Natural killer cell (primary cell): ENCODE measurements at regions of chr7 and their contacts with region 1.

Region 1: GRCh38 chr7:130961128-130961601 is 227.2 kb upstream of the KLF14 start:
- DNase-seq: peak; percentile 39 to 93
- ATAC-seq: peak; percentile 77 to 87 (median 83)
- H3K4me3 ChIP-seq: peak overlapping the region; percentile 11
- H3K4me3 Mint-ChIP-seq: peak overlapping the region; percentile 83
- H3K27ac ChIP-seq: peak overlapping the region; percentile 79
- H3K27ac Mint-ChIP-seq: peak overlapping the region; percentile 84 to 85
- H3K4me1 ChIP-seq: peaks cover 43% of the 10 kb centered on the region
- H3K4me1 Mint-ChIP-seq: peaks cover 62 to 68% of the 10 kb centered on the region in 2 donors
- H3K27me3 ChIP-seq: no peaks in the 10 kb centered on the region
- H3K27me3 Mint-ChIP-seq: no peaks in the 10 kb centered on the region
- CTCF ChIP-seq: no peak

Region 2: GRCh38 chr7:130919316-130920103 is 41.7 kb before region 1 on chr7:
- intact Hi-C with region 1: no loop called
- DNase-seq: no peak
- ATAC-seq: no peak
- H3K4me3 ChIP-seq: no peak overlapping the region
- H3K4me3 Mint-ChIP-seq: no peak overlapping the region
- H3K27ac ChIP-seq: no peak overlapping the region
- H3K27ac Mint-ChIP-seq: peak overlapping the region; percentile 64 to 77
- H3K4me1 ChIP-seq: peaks cover 27% of the 10 kb centered on the region
- H3K4me1 Mint-ChIP-seq: peaks cover 39 to 63% of the 10 kb centered on the region in 2 donors
- H3K27me3 ChIP-seq: no peaks in the 10 kb centered on the region
- H3K27me3 Mint-ChIP-seq: no peaks in the 10 kb centered on the region
- CTCF ChIP-seq: no peak

Region 3: DNA sequence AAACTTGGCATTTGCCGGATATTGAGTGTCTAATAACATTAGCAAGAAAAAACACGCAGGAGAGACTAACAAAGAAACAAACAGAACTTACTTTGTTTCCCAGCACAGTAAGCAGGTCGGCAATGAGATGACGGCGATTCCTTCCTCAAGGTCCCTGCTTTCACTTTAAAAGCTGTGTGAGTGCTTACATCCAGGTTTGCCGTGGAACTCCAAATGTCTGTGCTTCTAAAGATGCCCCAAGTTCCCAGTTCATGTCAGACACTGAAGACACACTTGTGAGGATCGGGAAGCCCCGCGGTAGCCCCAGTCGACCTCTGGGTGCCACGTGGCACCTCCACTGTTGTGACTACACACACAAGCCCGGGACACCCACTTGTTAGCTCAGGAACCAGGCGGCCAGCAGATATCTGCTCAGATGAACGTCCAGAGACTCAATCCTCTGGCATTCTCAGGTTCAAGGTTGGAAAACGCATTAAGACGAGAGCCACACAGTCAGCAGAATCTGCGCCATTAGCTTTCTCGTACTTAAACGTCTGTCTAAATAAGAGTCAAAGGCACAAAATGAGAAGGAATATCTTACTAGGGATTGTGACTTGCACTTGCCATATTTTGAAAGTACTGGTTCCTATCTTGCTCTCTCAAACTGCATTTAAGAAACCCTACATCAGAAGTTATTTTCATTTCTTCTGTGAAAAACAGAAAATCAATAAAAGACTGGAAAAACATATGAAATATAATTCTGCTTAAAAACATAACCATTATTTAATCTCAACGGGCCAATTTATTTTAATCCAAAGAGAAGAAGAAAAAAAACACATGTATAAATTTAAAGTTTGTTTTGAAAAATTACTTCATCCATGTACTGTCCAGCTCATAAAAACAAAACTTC is 19.6 kb before region 1 on chr7:
- intact Hi-C with region 1: loop called (anchors 2 kb)
- DNase-seq: peak in 1 of 2 donors; percentile 73
- ATAC-seq: peak in 2 of 3 donors; percentile 19 to 47
- H3K4me3 ChIP-seq: peak overlapping the region; percentile 35
- H3K4me3 Mint-ChIP-seq: peak overlapping the region; percentile 94
- H3K27ac ChIP-seq: peak overlapping the region; percentile 77
- H3K27ac Mint-ChIP-seq: peak overlapping the region; percentile 89 to 97
- H3K4me1 ChIP-seq: peaks cover 18% of the 10 kb centered on the region
- H3K4me1 Mint-ChIP-seq: peaks cover 80 to 85% of the 10 kb centered on the region in 2 donors
- H3K27me3 ChIP-seq: no peaks in the 10 kb centered on the region
- H3K27me3 Mint-ChIP-seq: no peaks in the 10 kb centered on the region
- CTCF ChIP-seq: no peak

Region 4: DNA sequence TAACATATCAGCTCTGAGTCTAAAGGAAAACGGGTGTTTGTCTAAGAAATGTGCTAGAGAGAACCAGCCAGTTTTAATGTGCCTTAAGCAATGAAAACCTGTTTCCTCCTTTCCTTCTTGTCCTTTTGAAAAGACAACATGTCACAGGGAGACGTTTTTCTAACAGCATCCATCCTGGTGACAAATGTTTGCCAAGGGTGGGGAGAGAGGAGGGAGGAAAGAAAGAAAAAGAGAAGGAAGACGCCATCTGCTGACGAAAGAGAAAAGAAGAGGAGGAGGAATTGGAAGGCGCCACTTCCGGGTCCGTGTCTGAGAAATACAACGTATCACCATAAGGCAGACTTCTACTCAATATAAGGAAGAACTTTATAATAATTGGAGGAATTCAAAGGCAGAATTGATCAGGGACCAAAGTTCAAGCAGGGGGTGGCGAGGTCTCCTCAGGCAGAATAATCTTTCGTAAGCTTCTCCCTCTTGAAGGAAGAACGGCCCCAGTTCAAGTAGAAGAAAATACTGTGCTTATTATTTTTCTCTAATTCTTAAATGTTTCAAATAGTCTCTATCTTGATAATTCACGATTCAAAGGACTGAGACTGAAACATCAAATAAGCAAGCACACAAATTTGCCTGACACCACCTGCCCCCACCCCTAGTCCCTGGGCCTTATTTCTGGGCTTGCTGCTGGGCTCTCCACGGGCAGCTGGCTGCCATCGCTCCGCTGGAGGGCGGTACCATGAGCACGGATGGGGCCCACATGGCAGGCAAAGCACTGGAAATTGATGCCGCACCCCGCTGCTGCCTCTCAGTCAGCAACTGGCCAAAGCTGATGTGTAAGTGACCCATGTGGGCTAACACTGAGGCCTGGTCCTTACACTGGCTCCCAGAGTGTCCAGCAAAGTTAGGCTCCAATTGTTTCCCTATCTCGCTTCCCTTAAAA is 46.5 kb after region 1 on chr7:
- intact Hi-C with region 1: loop called (anchors 5 kb)
- DNase-seq: peak in 1 of 2 donors; percentile 83
- ATAC-seq: peak; percentile 61 to 68 (median 67)
- H3K4me3 ChIP-seq: no peak overlapping the region
- H3K4me3 Mint-ChIP-seq: peak overlapping the region; percentile 77
- H3K27ac ChIP-seq: peak overlapping the region; percentile 62
- H3K27ac Mint-ChIP-seq: peak overlapping the region; percentile 77 to 88
- H3K4me1 ChIP-seq: peaks cover 28% of the 10 kb centered on the region
- H3K4me1 Mint-ChIP-seq: peaks cover 72 to 91% of the 10 kb centered on the region in 2 donors
- H3K27me3 ChIP-seq: no peaks in the 10 kb centered on the region
- H3K27me3 Mint-ChIP-seq: no peaks in the 10 kb centered on the region
- CTCF ChIP-seq: peak; percentile 52